Heart left ventricle (tissue), 16 donors: ENCODE measurements at regions of chr11 and their contacts with region 1.

Region 1: DNA sequence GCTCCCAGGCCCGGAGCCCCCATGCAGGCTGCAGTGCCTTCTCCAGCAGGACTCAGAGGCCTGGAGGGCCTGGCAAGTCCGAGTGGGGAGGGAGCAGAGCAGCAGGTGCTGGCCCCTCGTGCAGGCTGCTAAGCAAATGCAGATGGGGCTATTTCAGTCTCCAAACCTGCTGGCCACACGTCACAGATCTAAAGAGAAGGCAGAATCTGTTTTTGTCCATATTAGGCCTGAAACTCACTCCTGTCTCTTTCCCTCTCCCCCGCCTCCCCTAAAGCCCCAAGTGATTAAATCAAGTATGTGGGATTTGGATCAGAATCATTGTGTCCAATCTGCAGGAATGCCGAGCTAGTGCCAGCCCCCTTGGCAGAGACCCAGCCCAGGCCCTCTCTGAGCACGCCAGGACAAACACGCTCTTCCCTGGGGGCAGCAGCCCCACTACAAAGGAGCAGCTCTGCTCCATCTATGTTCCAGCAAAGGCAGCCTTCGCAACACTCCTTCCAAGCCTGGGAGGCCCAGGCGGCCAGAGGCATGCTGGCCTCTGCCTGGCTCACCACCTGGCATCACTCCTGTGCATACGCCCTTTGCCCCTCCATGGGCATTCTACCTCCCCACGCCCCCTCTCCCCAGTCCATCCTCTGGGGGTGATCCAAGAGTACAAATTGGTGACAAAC is 26.5 kb downstream of the RPL27A start:
- DNase-seq: peak; percentile 82 to 92 (median 91)
- ATAC-seq: peak; percentile 46 to 80 (median 70)
- H3K4me3 ChIP-seq: no peak overlapping the region
- H3K27ac ChIP-seq: peak overlapping the region; percentile 61 to 95 (median 79)
- H3K4me1 ChIP-seq: peaks cover 14 to 45% (median 35%) of the 10 kb centered on the region in 12 donors
- H3K27me3 ChIP-seq: no peaks in the 10 kb centered on the region
- CTCF ChIP-seq: no peak
- POLR2A ChIP-seq: no peak

Region 2: DNA sequence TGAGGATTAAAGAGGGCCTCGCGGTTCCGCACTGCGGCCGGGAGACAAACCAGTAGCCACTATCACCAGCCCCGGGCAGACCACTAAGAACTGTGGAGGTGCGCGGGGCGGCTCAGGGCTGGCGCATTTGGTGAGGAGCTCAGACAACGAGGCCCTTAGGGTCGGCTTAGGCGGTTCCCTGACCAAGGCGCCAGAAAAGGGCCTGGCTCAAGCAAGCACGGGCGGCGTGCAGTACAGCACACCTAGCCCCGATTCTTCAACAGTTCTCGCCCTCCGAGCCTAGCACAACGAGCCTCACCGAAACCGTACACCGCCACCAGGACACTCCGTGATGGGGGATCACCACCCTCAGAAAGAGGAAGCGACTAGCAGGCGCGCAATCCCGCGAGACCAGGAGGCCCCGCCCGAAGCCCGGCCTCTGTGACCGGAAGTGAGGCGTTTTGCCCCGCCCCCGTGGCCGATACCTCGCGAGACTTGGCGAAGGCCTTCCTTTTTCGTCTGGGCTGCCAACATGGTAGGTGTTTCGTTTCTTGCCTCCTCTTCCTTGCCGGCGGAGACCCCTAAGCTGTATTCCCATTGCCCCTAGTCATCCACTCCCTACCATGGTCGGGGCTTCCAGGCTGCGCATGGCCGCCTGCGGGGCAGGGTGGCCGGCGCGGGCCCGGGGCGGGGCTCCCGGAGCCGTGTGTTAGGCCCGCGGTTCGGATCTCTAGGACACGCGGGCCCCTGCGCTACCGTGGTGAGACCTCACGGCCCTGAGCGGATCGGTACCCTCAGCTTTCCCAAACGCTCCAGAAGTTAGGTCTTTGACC is 26.6 kb before region 1 on chr11 and contains the starts of genes RPL27A and TRIM66:
- intact Hi-C with region 1: no loop called
- DNase-seq: peak; percentile 99
- ATAC-seq: peak; percentile 97 to 99 (median 98)
- H3K4me3 ChIP-seq: peak within 1 kb of the TSS; percentile 58 to 100 (median 90)
- H3K27ac ChIP-seq: peak within 1 kb of the TSS; percentile 91 to 98 (median 96)
- H3K4me1 ChIP-seq: peaks cover 0 to 34% (median 22%) of the 10 kb centered on the region in 12 donors
- H3K27me3 ChIP-seq: no peaks in the 10 kb centered on the region
- CTCF ChIP-seq: peak in 6 of 12 donors; percentile 7 to 26 (median 13)
- POLR2A ChIP-seq: peak; percentile 51 to 97
- total RNA-seq, gene RPL27A: 299 to 597 (median 438) TPM
- total RNA-seq, gene TRIM66: 0.71 to 10.1 (median 4.1) TPM

Region 3: DNA sequence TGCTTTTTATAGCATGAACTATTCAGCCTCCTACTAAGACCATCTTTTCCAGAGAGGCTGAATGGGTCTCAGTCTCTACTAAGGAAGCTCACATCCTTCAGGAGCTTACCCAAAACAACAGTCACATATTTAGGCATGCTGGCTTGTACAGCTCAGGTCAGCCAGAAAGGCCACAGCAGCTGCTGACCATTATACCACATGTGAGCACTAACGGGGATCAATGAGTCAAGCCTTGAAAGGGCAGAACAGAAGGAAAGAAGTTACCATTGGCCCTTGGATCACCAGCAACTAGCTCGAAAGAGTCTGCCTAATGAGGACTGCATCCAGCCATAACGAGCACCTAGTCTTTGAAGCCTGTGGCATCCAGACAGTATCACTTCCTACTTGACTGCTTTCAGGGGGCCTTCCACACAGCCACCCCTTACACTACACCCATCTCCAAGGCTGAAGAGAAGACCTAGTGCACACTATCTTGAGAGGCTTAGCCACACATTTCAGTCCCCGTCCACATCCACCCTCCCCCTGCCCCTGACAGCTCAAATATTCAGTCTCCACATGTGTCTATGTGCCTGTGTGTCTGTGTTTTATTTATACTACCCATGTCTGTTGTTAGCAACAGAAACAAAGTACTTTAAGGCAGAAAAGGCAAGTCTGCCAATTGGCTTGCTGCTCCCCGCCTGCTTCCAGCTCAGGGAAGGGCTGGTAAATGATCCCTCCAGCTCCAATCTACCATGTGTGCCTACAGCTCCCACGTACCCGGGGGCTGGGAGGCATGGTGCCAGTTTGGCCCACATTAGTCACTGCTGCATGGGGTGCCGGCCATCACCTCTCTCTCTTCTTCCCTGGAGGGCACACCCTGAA is 69.0 kb after region 1 on chr11:
- intact Hi-C with region 1: loop called in 1 of 10 experiments (anchors 10 kb)
- DNase-seq: peak; percentile 47 to 79 (median 74)
- ATAC-seq: peak; percentile 86 to 91 (median 88)
- H3K4me3 ChIP-seq: no peak overlapping the region
- H3K27ac ChIP-seq: peak overlapping the region; percentile 41 to 86 (median 68)
- H3K4me1 ChIP-seq: peaks cover 0 to 90% (median 60%) of the 10 kb centered on the region in 12 donors
- H3K27me3 ChIP-seq: no peaks in the 10 kb centered on the region
- CTCF ChIP-seq: no peak
- POLR2A ChIP-seq: no peak